ENCODE measurements at regions of chr2 and their contacts with region 1.

Region 1: DNA sequence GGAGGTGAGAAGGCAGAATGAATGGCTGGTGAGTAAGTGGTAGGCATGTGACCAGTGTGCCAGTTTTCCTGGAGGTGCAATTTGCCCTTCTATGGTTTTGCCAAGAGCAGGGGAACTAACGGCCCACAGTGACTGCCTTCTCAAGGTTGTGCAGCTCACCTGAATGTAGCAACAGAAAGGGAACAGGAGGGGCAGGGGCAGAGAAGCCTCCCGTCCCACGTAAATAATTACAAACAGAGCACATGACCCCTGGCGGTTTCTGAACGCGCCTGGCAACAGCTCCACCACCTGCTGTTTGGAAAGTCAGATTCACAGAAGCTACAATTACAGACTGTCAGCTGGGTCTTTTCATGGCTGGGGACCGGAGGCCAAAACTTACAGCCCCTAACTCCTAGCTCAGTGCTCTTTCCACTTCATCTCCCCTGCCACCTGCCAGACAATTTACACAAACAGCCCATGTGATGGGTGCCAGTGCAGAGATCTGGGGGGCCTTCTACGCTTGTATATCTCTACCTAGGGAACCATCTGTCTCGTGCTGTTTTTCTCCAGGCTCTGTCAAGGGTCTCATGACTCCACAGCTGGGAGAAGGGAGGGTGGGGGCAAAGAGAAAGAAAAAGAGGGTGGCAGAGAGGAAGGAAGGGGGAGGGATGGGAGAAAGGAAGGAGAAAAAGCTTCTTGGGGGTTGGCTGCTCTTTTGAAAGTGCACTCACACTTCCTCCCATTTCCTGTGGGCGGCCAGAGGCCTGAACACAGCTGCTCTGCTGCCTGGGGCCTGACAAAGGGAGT is 69.6 kb downstream of the POLR1A start:
- DNase-seq: peak; percentile 86
- ATAC-seq: peak; percentile 55
- H3K4me3 Mint-ChIP-seq: peak overlapping the region; percentile 63
- H3K27ac Mint-ChIP-seq: peak overlapping the region; percentile 97
- H3K4me1 Mint-ChIP-seq: peaks cover 76% of the 10 kb centered on the region
- H3K27me3 Mint-ChIP-seq: no peaks in the 10 kb centered on the region
- CTCF ChIP-seq: no peak

Region 2: DNA sequence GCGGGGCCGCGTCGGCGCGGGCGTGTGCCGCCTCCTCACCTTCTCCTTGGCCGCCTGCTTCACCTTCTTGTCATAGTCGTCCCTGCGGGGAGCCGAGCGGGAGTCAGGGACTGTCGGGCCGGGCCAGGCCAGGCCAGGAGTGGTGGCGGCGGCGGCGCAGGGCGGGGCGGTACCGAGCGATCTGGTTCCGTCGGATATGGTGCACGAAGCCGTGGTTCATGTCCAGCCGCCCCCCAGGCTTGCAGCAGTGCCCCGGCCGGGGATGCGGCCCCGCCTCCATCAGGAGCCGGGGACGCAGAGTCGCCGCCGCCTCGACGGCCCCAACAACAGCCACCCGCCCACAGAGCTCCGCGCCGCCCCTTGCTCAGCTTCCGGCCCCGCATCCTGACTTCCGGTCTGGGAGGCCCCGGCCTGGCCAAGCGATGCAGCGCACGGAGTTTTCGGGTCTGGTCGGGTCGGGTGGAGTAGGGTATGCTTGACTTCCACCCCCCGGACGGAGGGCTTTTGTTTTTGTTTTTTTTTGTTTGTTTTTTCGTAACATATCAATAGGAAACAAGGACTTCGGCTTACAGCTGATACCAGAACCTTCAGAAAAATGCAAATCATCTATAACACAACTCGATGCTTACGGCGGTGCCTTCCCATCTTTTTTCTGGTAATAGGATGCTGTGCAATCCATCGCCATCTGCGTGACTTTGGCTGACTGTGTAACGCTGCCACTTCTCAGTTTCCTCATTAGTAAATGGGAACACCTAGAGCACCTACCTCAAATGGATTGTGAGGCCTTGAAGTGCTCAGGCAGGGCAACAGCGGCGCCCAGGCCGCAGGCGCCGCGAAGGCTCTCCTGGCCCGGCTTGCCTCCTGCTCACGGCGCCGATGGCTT is 424.1 kb before region 1 on chr2 and contains the start of gene C2orf68:
- CTCF ChIA-PET with region 1: no interaction called
- POLR2A ChIA-PET with region 1: no interaction called
- intact Hi-C with region 1: no loop called
- DNase-seq: peak; percentile 94
- ATAC-seq: peak; percentile 74
- H3K4me3 Mint-ChIP-seq: peak within 1 kb of the TSS; percentile 98
- H3K27ac Mint-ChIP-seq: peak within 1 kb of the TSS; percentile 97
- H3K4me1 Mint-ChIP-seq: peaks cover 37% of the 10 kb centered on the region
- H3K27me3 Mint-ChIP-seq: no peaks in the 10 kb centered on the region
- CTCF ChIP-seq: no peak
- total RNA-seq, gene C2orf68: 25.4 to 29.1 TPM

Region 3: GRCh38 chr2:85999061-85999831 is 36.8 kb before region 1 on chr2:
- CTCF ChIA-PET with region 1: interaction called, 5 read pairs
- POLR2A ChIA-PET with region 1: interaction called, 4 read pairs
- intact Hi-C with region 1: loop called (anchors 5 kb)
- DNase-seq: peak; percentile 75
- ATAC-seq: peak; percentile 94
- H3K4me3 Mint-ChIP-seq: peak overlapping the region; percentile 55
- H3K27ac Mint-ChIP-seq: peak overlapping the region; percentile 88
- H3K4me1 Mint-ChIP-seq: peaks cover 58% of the 10 kb centered on the region
- H3K27me3 Mint-ChIP-seq: no peaks in the 10 kb centered on the region
- CTCF ChIP-seq: no peak

Region 4: DNA sequence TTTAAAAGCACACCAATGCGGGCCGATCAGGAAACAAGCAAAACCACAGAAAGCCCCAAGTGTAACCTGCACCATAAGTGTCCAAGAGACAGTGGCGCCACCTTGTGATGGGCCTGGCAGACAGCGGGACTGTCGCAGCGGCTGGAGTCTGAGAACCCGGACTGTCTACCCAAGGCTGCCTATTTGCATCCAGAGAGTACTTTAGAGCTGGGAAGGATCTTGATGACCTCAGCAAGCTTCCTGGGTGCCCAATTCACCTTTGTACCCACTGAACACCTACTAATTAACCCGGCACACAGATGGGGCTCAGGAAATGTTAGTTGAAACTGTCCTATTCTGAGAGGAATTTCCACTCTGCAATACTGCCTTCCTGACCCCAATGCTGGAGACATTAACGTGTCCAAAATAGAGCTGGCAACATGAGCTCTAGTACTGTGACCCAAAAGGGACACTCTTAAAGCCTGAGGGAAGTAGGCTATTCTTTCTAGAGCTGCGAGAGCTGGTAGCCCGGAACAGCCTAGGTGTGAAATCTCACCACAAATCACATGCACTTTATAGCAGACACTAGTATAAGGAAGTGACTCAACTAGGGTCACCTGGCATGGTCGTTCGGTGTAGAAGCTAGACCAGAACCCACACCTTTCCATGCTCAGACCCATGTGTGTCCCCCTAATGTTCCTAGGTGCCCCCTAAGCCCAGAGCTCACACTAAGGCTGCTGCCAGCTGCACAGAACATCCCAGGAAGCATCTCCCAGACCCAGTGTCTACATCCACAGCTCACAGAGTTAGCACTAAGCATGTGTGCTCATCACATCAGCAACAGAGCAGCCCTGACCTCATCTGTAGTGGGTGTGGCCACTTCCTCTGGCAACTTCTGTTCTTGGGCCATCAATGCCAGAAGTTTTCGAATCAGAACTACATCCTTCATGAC is 44.2 kb after region 1 on chr2:
- CTCF ChIA-PET with region 1: interaction called, 19 read pairs
- POLR2A ChIA-PET with region 1: no interaction called
- intact Hi-C with region 1: no loop called
- DNase-seq: peak; percentile 87
- ATAC-seq: peak; percentile 78
- H3K4me3 Mint-ChIP-seq: no peak overlapping the region
- H3K27ac Mint-ChIP-seq: peak overlapping the region; percentile 80
- H3K4me1 Mint-ChIP-seq: peaks cover 25% of the 10 kb centered on the region
- H3K27me3 Mint-ChIP-seq: no peaks in the 10 kb centered on the region
- CTCF ChIP-seq: peak; percentile 75